PC-3 (cell line): ENCODE measurements at regions of chr2 and their contacts with region 1.

Region 1: DNA sequence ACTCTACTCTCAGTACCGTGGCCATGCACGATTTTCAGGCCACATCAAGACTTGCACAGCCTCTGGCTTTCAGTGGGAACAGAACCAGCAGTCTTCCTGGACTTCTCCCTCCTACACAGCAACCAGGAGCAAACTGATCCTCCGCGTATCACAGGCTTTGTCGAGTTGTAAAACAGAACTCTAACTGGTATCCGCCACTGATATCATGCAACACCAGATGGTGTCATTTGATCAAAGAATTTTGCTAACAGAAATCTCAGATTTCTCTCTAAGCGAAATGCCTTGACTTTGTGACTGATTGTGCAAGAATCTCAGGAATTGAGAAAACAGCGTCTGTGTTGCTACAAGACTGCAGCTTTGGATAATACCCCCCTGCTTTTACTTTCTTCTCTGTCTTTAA is 85.7 kb downstream of the COPS8 start:
- DNase-seq: peak; percentile 85
- ATAC-seq: peak; percentile 89
- H3K4me3 ChIP-seq: no peak overlapping the region; the same call in 1 of the 2 replicates
- H3K27ac ChIP-seq: no peak overlapping the region
- H3K4me1 ChIP-seq: peaks cover 20% of the 10 kb centered on the region
- H3K27me3 ChIP-seq: no peaks in the 10 kb centered on the region
- CTCF ChIP-seq: peak; percentile 73

Region 2: GRCh38 chr2:235917506-235917905 is 1253.9 kb before region 1 on chr2:
- CTCF ChIA-PET with region 1: no interaction called
- POLR2A ChIA-PET with region 1: no interaction called
- intact Hi-C with region 1: no loop called
- DNase-seq: no peak
- ATAC-seq: no peak
- H3K4me3 ChIP-seq: no peak overlapping the region
- H3K27ac ChIP-seq: no peak overlapping the region
- H3K4me1 ChIP-seq: no peaks in the 10 kb centered on the region
- H3K27me3 ChIP-seq: no peaks in the 10 kb centered on the region
- CTCF ChIP-seq: no peak

Region 3: DNA sequence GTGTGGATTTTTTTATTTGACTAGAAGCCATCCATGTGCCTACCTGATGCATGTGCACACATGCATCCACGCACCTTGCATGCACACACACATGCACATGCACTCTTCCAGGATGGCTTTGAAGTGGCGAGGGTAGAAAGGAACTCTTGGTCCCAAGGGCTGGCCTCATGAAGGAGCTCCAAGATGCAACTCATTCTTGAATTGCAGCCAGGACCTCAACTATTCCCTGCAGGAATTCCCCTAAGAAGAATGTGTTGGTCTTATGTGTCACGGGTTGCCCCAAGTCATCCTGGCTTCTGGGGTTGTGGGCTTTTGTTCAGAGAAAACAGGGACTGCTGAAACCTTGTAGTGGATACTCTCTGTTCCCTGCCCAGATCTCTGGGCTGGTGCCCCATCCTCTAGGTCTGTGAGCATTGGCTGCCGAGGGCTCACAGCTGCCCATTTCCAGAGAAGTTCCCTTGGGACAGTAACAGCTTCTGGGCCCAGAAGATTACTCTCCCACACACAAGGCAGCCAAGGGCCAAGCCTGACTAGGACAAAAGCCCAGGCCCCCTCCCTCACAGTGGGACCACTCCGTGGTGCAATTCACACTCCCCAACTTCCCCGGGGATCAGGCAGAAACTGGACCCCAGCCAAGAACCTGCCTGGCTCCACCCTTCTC is 51.9 kb after region 1 on chr2:
- CTCF ChIA-PET with region 1: no interaction called
- POLR2A ChIA-PET with region 1: no interaction called
- intact Hi-C with region 1: loop called (anchors 10 kb)
- DNase-seq: peak; percentile 67
- ATAC-seq: no peak
- H3K4me3 ChIP-seq: no peak overlapping the region
- H3K27ac ChIP-seq: no peak overlapping the region; the same call in 1 of the 2 replicates
- H3K4me1 ChIP-seq: peaks cover 32% of the 10 kb centered on the region
- H3K27me3 ChIP-seq: no peaks in the 10 kb centered on the region
- CTCF ChIP-seq: no peak

Region 4: DNA sequence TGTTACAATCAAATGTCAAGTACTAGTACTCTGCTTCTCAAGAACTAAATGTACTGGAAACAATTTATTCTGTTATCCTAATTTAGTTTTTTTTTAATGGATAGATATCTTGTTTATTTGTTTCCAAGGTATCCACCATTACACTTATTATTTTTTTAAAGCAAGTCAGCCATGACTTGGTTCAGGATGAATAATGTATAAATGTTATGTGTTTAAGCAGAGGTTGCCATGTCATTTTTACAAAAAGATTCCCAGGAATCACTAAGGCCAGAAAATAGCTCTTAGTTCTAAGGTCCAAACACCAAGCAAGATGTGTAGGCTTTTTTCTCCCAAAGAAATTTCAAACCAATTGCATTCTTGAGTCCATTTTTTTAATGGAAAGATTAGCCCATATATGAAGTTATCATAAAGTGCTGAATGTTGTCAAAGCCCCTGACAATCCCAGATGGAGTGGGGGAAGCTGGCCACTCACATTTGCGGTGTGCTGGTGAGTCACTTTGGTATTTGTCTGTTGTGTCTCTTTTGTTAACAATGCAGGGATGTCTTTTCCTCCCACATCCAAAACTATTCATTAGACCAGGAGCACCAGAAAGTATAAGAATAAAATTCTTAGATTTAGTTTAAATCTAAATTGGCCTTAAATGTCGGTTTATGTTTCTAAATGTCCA is 83.6 kb after region 1 on chr2:
- CTCF ChIA-PET with region 1: no interaction called
- POLR2A ChIA-PET with region 1: no interaction called
- intact Hi-C with region 1: loop called (anchors 1 kb)
- DNase-seq: peak; percentile 63
- ATAC-seq: peak; percentile 11; the same call in 1 of the 2 replicates
- H3K4me3 ChIP-seq: no peak overlapping the region
- H3K27ac ChIP-seq: peak overlapping the region; percentile 88
- H3K4me1 ChIP-seq: peaks cover 52% of the 10 kb centered on the region
- H3K27me3 ChIP-seq: no peaks in the 10 kb centered on the region
- CTCF ChIP-seq: no peak

Region 5: DNA sequence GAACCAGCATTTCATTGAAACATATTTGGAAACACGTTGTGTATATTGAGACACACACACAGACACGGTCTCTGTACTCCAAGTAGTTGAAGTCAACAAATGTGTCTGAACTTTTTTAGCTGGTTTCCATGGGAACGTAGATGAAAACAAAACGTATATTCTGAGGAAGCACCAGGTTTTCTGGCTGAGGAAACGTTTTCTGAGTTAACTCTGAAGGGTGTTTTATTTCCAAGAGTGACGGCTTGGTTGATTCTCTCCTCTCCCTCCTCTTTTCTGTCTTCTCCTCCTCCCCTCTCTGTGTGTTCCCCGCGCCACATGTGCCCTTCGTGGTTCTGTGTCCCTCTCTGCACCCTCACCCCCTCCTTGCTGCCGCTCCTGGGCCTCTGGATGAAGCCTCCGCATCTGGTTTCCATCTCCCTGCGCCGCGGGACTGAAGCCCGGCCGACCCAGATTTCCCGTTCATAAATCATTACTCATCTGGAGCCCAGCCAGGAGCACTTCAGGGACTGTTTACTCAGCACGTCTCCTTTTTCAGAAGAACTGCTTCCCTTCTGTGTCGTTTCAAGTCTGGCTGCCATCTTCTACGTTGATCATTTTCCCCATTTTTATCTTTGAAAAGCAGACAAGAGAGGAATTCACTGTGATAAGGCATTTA is 119.9 kb after region 1 on chr2:
- CTCF ChIA-PET with region 1: no interaction called
- POLR2A ChIA-PET with region 1: no interaction called
- intact Hi-C with region 1: loop called (anchors 10 kb)
- DNase-seq: peak; percentile 98
- ATAC-seq: peak; percentile 82
- H3K4me3 ChIP-seq: peak overlapping the region; percentile 48
- H3K27ac ChIP-seq: peak overlapping the region; percentile 66
- H3K4me1 ChIP-seq: peaks cover 22% of the 10 kb centered on the region
- H3K27me3 ChIP-seq: no peaks in the 10 kb centered on the region
- CTCF ChIP-seq: no peak

Region 6: DNA sequence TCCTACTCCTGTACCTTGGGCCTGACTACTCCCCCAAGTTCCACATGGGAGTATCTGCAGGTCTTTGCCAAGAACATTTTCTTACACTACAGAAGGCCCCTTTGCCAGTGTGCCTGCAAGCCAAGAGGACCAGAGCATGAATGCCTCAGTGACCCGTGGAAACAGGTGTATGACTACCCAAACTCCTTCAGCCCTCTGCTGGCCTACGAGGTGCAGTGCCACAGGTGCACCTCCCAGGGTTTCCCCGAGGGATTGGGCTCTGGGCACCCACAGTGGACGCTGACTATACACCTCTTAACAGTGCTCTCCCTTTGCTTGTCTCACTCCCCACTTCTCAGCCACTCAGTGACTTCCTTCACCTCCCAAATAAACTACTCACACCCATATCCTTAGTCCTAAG is 151.2 kb after region 1 on chr2:
- CTCF ChIA-PET with region 1: no interaction called
- POLR2A ChIA-PET with region 1: no interaction called
- intact Hi-C with region 1: loop called (anchors 1 kb)
- DNase-seq: peak; percentile 63
- ATAC-seq: peak; percentile 96
- H3K4me3 ChIP-seq: no peak overlapping the region
- H3K27ac ChIP-seq: no peak overlapping the region
- H3K4me1 ChIP-seq: no peaks in the 10 kb centered on the region
- H3K27me3 ChIP-seq: no peaks in the 10 kb centered on the region
- CTCF ChIP-seq: peak; percentile 85

Region 7: DNA sequence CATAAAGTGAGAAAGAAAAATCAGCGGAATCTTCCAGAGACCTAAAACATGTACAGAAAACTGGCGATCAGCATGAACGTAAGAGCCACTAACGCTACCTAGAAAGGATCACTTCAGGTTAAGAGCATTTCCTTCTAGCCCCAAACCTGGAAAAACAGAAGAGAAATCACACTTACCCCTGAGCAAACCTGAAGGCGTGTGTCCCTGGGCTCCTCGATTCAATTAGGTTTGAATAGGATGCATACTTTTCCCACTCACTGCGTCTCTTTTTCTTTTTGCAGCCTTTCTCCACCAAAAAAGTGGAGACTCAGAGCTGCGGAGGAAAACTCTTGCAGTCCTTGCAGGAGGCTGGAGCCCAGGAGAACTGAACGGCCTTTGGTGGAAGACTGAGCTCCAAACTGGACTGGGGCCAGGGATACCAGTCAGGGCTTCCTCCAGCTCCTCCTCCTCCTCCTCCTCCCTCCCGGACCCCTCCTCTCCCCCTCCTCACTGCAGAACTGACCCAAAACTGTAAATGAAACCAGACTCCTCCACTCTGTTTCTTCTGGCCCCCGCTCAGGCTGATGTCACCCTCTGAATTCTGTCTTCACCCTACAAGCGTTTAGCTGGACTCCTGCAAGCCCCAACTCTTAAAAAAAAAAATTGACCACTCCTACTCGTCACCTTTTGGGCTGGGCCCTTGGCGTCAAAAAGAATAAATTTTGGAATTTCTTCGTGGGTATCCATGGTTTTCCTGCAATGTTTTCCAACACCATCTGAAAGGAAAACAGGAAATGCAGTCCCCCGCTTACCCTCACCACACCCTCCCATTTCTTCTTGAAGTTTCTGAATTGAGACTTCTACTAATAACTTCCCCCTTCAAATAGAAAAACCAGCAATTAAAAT is 242.6 kb after region 1 on chr2 and contains the start of gene COL6A3:
- CTCF ChIA-PET with region 1: interaction called, 4 read pairs
- POLR2A ChIA-PET with region 1: no interaction called
- intact Hi-C with region 1: loop called (anchors 1 kb)
- DNase-seq: no peak
- ATAC-seq: no peak
- H3K4me3 ChIP-seq: no peak within 1 kb of the TSS
- H3K27ac ChIP-seq: no peak within 1 kb of the TSS
- H3K4me1 ChIP-seq: no peaks in the 10 kb centered on the region
- H3K27me3 ChIP-seq: no peaks in the 10 kb centered on the region
- CTCF ChIP-seq: no peak
- total RNA-seq, gene COL6A3: 45.0 and 53.4 TPM in 2 replicates